ENCODE measurements at regions of chr10 and their contacts with region 1.

Region 1: DNA sequence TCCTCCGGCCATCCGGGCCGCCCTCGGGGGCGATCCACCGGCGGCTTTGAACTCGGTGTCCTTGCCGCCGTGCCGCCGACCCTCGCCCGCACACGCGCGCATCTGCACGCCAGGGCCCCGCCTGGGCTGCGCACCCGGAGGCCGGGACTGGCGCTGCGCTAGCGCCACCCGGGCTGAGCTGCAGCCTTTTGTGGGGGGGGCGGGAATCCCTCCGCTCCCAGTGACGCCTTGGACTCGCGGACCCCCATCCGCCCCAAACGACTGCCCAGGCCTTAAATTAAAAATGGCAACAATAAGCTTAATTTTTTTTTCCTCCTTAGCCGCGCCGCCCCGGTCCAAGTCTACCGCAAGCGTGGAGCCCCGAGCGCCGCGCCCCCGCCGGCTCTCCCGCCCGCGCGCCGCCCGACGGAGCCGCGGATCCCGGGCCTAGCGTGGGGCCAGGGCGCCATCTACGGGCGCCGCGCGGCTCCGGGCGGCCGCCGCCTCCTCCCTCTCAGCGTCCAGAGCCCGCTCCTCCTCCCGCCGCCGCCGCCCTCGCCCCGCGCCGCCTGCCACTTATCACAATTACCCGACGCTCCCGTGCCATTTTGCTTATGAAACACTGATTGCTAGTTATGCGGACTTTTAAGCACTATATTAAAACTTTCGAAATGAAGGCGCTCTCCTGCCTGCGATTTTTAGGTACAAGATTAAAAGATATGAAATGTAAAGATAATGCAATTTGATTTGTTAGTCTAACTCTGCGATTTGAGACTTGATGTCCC is 7.5 kb upstream of the EBF3 start:
- DNase-seq: peak; percentile 18

Region 2: GRCh38 chr10:129863201-129863663 is 108.3 kb before region 1 on chr10:
- in situ Hi-C with region 1: no loop called
- DNase-seq: no peak

Region 3: GRCh38 chr10:130160765-130161164 is 189.2 kb after region 1 on chr10:
- in situ Hi-C with region 1: loop called (anchors 25 kb)
- DNase-seq: no peak

Region 4: DNA sequence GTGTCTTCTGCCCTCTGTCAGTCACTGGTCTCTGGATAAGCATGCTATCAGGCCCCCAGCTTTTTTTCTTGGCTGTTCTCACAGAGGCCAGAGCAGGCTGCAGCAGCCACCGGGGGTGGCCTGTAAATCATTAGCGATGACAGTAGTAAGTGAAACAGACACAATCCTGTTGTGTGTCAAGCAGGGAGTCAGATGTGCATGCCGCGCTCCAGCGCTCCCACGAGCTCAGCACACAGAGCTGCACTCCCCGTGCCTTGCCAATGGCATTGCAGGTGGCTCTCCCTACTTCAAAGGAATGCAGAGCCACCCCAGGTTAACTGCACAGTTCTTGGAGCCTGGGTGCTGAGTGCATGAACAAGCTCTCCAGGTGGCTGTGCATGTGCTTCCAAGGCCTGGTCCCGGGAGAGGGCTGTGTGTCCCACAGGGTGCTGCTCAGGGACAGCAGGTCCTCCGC is 390.8 kb after region 1 on chr10:
- in situ Hi-C with region 1: no loop called
- DNase-seq: peak; percentile 12

Measured in G401 (cell line).